Activated naive CD4-positive, alpha-beta T cell treated with anti-CD3 and anti-CD28 coated beads for 36 hours (primary cell): ENCODE measurements at regions of chr6 and their contacts with region 1.

Region 1: DNA sequence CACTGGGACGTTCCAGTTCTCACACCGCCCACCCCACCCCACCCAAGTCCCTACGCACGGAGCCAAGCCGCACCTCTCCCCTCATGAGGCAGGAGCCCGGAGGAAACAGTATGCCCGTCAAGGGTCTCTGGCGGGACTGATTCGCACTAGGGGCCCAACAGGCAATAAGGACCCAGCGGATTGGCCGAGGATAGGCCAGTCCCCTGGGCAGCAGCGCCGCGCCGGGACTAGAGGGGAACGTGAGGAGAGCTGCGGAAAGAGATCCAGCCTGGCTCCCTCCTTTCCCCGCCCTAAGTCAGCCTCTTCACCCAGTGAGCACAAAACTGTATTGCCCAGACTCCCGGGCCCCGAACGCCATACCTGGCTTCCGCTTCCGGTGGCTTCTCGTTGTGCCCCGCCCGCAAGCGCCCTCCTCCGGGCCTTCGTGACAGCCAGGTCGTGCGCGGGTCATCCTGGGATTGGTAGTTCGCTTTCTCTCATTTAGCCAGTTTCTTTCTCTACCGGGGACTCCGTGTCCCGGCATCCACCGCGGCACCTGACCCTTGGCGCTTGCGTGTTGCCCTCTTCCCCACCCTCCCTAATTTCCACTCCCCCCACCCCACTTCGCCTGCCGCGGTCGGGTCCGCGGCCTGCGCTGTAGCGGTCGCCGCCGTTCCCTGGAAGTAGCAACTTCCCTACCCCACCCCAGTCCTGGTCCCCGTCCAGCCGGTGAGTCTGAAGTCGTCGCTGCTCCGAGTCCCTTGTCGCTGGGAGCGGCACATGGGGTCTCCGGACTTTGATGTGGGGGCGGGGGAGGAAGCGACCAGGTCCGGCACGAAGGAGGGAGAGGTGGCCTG is at the start of gene CSNK2B:
- DNase-seq: peak; percentile 99
- H3K4me3 Mint-ChIP-seq: peak within 1 kb of the TSS; percentile 95
- H3K27ac Mint-ChIP-seq: peak within 1 kb of the TSS; percentile 97
- H3K4me1 Mint-ChIP-seq: peaks cover 62% of the 10 kb centered on the region
- H3K27me3 Mint-ChIP-seq: no peaks in the 10 kb centered on the region
- total RNA-seq, gene CSNK2B: 215 to 219 TPM

Region 2: DNA sequence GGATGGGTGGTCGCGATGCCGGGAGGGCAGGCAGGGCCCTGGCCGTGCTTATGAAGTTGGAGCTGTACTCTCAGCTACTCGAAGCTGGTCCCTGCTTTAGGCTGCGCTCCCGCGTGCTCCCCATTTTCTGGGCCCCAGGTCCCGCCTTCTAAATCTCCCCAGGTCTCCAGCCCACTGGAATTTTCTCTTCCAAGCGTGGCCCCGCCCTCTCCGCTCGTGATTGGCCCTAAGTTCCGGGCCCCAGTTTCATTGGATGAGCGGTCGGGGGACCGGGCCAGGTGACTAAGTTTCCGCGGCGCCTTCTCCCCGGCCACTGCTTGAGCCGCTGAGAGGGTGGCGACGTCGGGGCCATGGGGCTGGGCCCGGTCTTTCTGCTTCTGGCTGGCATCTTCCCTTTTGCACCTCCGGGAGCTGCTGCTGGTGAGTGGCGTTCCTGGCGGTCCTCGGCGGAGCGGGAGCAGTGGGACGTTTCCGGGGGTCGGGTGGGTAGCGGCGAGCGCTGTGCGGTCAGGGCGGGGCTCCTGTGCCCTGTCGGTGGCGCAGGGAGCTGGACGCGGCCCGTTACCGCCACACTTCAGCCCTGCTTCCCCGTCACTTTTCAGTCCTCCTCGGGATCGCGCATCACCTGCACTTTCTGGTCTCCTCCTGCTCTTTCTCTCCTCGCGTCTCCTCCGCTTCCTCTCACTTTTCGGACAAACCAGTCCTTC is 262.3 kb before region 1 on chr6 and contains the start of gene MICA:
- CTCF ChIA-PET with region 1: no interaction called
- intact Hi-C with region 1: loop called (anchors 5 kb)
- DNase-seq: peak; percentile 77
- H3K4me3 Mint-ChIP-seq: peak within 1 kb of the TSS; percentile 92
- H3K27ac Mint-ChIP-seq: peak within 1 kb of the TSS; percentile 17
- H3K4me1 Mint-ChIP-seq: peaks cover 62% of the 10 kb centered on the region
- H3K27me3 Mint-ChIP-seq: no peaks in the 10 kb centered on the region
- total RNA-seq, gene MICA: 10.2 to 10.4 TPM

Region 3: GRCh38 chr6:31538805-31539400 is 126.8 kb before region 1 on chr6:
- CTCF ChIA-PET with region 1: no interaction called
- intact Hi-C with region 1: no loop called
- DNase-seq: no peak
- H3K4me3 Mint-ChIP-seq: peak overlapping the region; percentile 93
- H3K27ac Mint-ChIP-seq: peak overlapping the region; percentile 99
- H3K4me1 Mint-ChIP-seq: peaks cover 56% of the 10 kb centered on the region
- H3K27me3 Mint-ChIP-seq: no peaks in the 10 kb centered on the region

Region 4: DNA sequence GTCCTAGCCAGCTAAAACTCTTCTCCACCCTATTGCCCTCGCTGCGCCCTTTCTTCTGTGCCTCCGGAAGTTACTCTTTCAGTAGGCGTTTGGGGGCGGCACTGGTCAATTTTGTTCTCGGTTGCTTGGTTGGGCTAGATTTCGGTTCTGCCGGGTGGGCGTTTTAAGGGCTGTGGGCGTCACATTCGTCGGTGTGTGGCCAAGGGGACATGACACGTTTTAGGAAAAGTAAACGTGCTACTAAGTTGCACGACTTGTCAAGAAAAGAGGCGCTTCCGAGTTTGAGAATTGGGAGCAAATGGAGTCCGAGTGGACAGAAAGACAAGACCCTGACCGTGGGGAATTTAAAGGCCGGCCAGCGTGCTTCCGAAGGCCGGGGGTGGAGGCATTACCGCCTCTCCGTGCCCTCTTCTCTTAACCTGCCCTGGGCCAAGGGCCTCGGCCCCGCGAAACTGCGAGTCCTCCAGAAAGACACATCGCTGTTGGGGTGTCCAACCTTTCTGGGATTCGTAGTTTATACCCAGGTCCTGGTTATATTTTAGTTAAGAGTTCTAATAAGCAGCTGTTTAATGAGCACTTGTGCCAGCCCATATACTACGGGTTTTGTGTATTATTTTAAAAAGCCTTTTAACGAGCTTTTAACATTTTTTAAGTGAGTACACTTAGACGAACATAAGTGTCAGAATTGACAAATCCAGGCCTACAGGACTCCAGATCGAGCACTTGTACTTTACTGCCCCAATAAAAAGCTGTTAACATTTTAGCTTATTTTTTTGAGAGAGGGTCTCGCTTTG is 12.6 kb before region 1 on chr6:
- CTCF ChIA-PET with region 1: interaction called, 4 read pairs
- intact Hi-C with region 1: loop called (anchors 1 kb)
- DNase-seq: peak; percentile 92
- H3K4me3 Mint-ChIP-seq: peak overlapping the region; percentile 96
- H3K27ac Mint-ChIP-seq: peak overlapping the region; percentile 98
- H3K4me1 Mint-ChIP-seq: peaks cover 44% of the 10 kb centered on the region
- H3K27me3 Mint-ChIP-seq: no peaks in the 10 kb centered on the region

Region 5: DNA sequence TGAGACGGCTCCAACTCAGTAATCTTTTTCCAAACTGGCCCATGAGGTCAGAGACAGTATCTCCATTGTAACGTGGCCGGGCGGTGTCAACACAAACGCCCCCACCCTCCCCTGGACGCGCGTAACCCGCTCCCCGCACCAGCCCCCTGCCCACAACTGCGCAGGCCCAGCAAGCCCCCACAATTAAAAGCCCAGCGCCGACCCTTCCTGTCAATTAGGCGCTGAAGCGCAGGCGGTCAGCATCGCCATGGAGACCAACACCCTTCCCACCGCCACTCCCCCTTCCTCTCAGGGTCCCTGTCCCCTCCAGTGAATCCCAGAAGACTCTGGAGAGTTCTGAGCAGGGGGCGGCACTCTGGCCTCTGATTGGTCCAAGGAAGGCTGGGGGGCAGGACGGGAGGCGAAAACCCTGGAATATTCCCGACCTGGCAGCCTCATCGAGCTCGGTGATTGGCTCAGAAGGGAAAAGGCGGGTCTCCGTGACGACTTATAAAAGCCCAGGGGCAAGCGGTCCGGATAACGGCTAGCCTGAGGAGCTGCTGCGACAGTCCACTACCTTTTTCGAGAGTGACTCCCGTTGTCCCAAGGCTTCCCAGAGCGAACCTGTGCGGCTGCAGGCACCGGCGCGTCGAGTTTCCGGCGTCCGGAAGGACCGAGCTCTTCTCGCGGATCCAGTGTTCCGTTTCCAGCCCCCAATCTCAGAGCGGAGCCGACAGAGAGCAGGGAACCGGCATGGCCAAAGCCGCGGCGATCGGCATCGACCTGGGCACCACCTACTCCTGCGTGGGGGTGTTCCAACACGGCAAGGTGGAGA is 149.5 kb after region 1 on chr6 and contains the starts of genes HSPA1A and HSPA1L:
- CTCF ChIA-PET with region 1: no interaction called
- intact Hi-C with region 1: loop called (anchors 2 kb)
- DNase-seq: peak; percentile 60
- H3K4me3 Mint-ChIP-seq: peak within 1 kb of the TSS; percentile 84
- H3K27ac Mint-ChIP-seq: peak within 1 kb of the TSS; percentile 96
- H3K4me1 Mint-ChIP-seq: peaks cover 54% of the 10 kb centered on the region
- H3K27me3 Mint-ChIP-seq: no peaks in the 10 kb centered on the region
- total RNA-seq, gene HSPA1A: 19.8 to 23.1 TPM
- total RNA-seq, gene HSPA1L: 0.86 to 0.95 TPM

Region 6: GRCh38 chr6:31834434-31835198 is 168.9 kb after region 1 on chr6:
- CTCF ChIA-PET with region 1: no interaction called
- intact Hi-C with region 1: loop called (anchors 1 kb)
- DNase-seq: peak; percentile 80
- H3K4me3 Mint-ChIP-seq: peak overlapping the region; percentile 94
- H3K27ac Mint-ChIP-seq: peak overlapping the region; percentile 98
- H3K4me1 Mint-ChIP-seq: peaks cover 46% of the 10 kb centered on the region
- H3K27me3 Mint-ChIP-seq: no peaks in the 10 kb centered on the region

Region 7: GRCh38 chr6:31901953-31902643 is 236.4 kb after region 1 on chr6 and contains the start of gene ZBTB12:
- CTCF ChIA-PET with region 1: no interaction called
- intact Hi-C with region 1: loop called (anchors 1 kb)
- DNase-seq: peak; percentile 87
- H3K4me3 Mint-ChIP-seq: peak within 1 kb of the TSS; percentile 82
- H3K27ac Mint-ChIP-seq: peak within 1 kb of the TSS; percentile 81
- H3K4me1 Mint-ChIP-seq: peaks cover 29% of the 10 kb centered on the region
- H3K27me3 Mint-ChIP-seq: no peaks in the 10 kb centered on the region
- total RNA-seq, gene ZBTB12: 0.57 to 0.69 TPM

Region 8: DNA sequence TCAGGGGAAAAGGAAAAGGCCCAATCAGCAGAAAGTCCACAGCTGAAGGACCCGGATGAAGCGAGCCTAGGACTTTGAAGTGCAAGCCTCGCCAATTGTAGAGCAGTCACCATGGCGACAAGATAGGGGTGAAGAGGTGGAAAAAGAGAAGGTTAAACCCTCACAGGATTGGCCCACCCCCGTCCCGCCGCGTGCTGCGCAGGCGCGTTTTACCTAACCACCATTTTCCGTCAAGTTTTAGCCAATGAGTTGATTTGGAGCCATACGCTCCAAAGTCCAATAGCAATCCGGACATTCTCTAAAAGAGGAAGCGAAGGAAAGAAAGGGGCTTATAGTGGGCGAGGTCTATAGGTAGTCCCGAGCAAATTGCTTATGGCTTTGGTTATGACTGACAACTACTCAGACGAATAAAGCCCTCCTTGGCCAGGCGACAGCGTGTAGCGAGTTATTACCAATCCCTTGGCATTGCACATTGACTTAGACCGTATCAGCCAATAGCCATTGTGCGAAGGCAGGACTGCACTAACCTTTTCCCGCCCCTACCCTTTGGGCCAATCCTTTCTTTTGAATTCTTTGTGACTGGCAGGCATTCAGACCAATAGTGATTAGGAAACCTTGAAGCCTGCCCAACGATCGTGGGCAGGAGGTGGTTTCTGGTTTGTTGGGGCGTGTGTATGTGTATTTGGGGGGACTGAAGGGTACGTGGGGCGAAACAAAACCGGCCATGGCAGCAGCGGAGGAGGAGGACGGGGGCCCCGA is 512.2 kb after region 1 on chr6 and contains the start of gene RNF5:
- CTCF ChIA-PET with region 1: no interaction called
- intact Hi-C with region 1: loop called (anchors 2 kb)
- DNase-seq: peak; percentile 97
- H3K4me3 Mint-ChIP-seq: peak within 1 kb of the TSS; percentile 91
- H3K27ac Mint-ChIP-seq: peak within 1 kb of the TSS; percentile 96
- H3K4me1 Mint-ChIP-seq: peaks cover 61% of the 10 kb centered on the region
- H3K27me3 Mint-ChIP-seq: no peaks in the 10 kb centered on the region
- total RNA-seq, gene RNF5: 39.5 to 39.9 TPM